PC-3 (cell line): ENCODE measurements at regions of chr3 and their contacts with region 1.

Region 1: GRCh38 chr3:57179580-57180410 is 14.6 kb upstream of the IL17RD start:
- DNase-seq: peak; percentile 59
- ATAC-seq: peak; percentile 93
- H3K4me3 ChIP-seq: no peak overlapping the region
- H3K27ac ChIP-seq: no peak overlapping the region
- H3K4me1 ChIP-seq: no peaks in the 10 kb centered on the region
- H3K27me3 ChIP-seq: no peaks in the 10 kb centered on the region
- CTCF ChIP-seq: peak; percentile 67

Region 2: DNA sequence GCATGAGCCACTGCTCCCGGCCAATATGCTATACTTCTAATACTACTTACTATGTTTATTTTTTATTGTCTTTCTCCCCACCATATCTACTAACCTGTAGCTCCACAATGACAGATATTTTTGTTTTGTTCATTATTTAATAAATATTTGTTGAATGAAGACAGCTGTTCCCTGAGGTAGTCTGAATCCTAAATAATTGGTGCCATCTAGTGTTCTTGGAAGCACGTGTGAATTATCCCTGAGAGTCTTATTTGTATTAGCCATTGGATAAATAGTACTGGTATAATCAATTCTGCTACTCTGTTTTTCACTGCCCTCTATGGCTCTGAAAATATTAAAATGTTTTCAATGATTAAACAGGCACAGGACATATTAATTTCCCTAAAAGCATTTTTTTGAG is 42.1 kb after region 1 on chr3:
- CTCF ChIA-PET with region 1: interaction called, 3 read pairs
- POLR2A ChIA-PET with region 1: no interaction called
- intact Hi-C with region 1: loop called (anchors 2 kb)
- DNase-seq: peak; percentile 62
- ATAC-seq: peak; percentile 82
- H3K4me3 ChIP-seq: no peak overlapping the region
- H3K27ac ChIP-seq: no peak overlapping the region
- H3K4me1 ChIP-seq: peaks cover 10% of the 10 kb centered on the region
- H3K27me3 ChIP-seq: no peaks in the 10 kb centered on the region
- CTCF ChIP-seq: peak; percentile 72

Region 3: GRCh38 chr3:57434041-57434440 is 254.2 kb after region 1 on chr3:
- CTCF ChIA-PET with region 1: interaction called, 3 read pairs
- POLR2A ChIA-PET with region 1: no interaction called
- intact Hi-C with region 1: loop called (anchors 5 kb)
- DNase-seq: peak; percentile 84
- ATAC-seq: peak; percentile 92
- H3K4me3 ChIP-seq: no peak overlapping the region
- H3K27ac ChIP-seq: no peak overlapping the region
- H3K4me1 ChIP-seq: no peaks in the 10 kb centered on the region
- H3K27me3 ChIP-seq: no peaks in the 10 kb centered on the region
- CTCF ChIP-seq: peak; percentile 80